Naive thymus-derived CD4-positive, alpha-beta T cell (primary cell): ENCODE measurements at regions of chr1 and their contacts with region 1.

Region 1: GRCh38 chr1:39609618-39610331 is 29.7 kb downstream of the HEYL start:
- DNase-seq: peak; percentile 10 to 84 (median 66)
- ATAC-seq: peak; percentile 89
- H3K4me3 ChIP-seq: no peak overlapping the region
- H3K4me3 Mint-ChIP-seq: peak overlapping the region in 2 of 10 donors; percentile 51 to 59
- H3K27ac ChIP-seq: no peak overlapping the region
- H3K27ac Mint-ChIP-seq: no peak overlapping the region
- H3K4me1 ChIP-seq: no peaks in the 10 kb centered on the region
- H3K4me1 Mint-ChIP-seq: peaks cover 0 to 9% (median 8%) of the 10 kb centered on the region in 7 donors
- H3K27me3 ChIP-seq: no peaks in the 10 kb centered on the region
- H3K27me3 Mint-ChIP-seq: peaks cover 0 to 4% (median 0%) of the 10 kb centered on the region in 5 donors

Region 2: DNA sequence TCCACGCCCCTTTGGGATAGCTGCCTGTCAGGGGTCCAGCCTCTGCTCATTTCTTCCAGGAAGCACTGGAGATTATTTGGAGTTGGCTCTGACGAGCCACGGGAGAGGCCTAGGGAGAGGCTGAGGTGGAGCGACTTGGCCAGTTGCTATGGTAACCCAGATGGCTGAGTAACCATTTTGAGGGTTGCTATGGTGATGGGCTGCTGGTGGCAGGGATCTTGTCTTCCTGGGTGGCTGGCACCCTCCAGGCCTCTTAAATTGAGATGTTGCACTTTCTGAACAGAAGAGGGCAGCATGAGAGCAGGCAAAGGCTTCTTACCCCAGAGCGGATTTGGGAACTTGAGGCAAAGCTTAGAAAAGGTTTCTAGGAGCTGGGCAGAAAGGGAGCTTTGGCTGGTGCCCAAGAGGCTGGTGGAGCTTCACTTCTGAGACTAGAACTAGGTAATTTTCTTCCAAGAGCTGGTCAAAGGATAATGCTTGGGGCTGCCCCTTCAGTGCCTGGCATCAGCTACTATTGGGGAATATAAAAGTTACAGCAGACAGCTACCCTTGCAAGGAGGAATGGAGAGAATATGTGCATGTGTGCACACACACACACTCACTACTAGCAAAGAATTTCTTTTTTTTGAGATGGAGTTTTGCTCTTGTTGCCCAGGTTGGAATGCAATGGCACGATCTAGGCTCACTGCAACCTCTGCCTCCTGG is 511.1 kb before region 1 on chr1:
- CTCF ChIA-PET with region 1: no interaction called
- POLR2A ChIA-PET with region 1: no interaction called
- intact Hi-C with region 1: loop called in 1 of 2 experiments (anchors 2 kb)
- DNase-seq: peak in 8 of 9 donors; percentile 42 to 75 (median 69)
- ATAC-seq: peak; percentile 89
- H3K4me3 ChIP-seq: no peak overlapping the region
- H3K4me3 Mint-ChIP-seq: no peak overlapping the region
- H3K27ac ChIP-seq: no peak overlapping the region
- H3K27ac Mint-ChIP-seq: peak overlapping the region in 5 of 9 donors; percentile 5 to 65 (median 9)
- H3K4me1 ChIP-seq: peaks cover 3 to 10% of the 10 kb centered on the region in 2 donors
- H3K4me1 Mint-ChIP-seq: peaks cover 22 to 24% (median 23%) of the 10 kb centered on the region in 7 donors
- H3K27me3 ChIP-seq: no peaks in the 10 kb centered on the region
- H3K27me3 Mint-ChIP-seq: peaks cover 0 to 3% (median 0%) of the 10 kb centered on the region in 5 donors

Region 3: GRCh38 chr1:39653546-39654031 is 43.8 kb after region 1 on chr1:
- CTCF ChIA-PET with region 1: interaction called, 29 read pairs
- POLR2A ChIA-PET with region 1: no interaction called
- intact Hi-C with region 1: loop called (anchors 1 kb)
- DNase-seq: peak; percentile 51 to 74 (median 68)
- ATAC-seq: peak; percentile 89
- H3K4me3 ChIP-seq: no peak overlapping the region
- H3K4me3 Mint-ChIP-seq: no peak overlapping the region
- H3K27ac ChIP-seq: no peak overlapping the region
- H3K27ac Mint-ChIP-seq: no peak overlapping the region
- H3K4me1 ChIP-seq: peaks cover 0 to 3% of the 10 kb centered on the region in 2 donors
- H3K4me1 Mint-ChIP-seq: peaks cover 0 to 17% (median 4%) of the 10 kb centered on the region in 7 donors
- H3K27me3 ChIP-seq: no peaks in the 10 kb centered on the region
- H3K27me3 Mint-ChIP-seq: peaks cover 0 to 13% (median 0%) of the 10 kb centered on the region in 5 donors

Region 4: GRCh38 chr1:39711966-39712340 is 102.2 kb after region 1 on chr1:
- CTCF ChIA-PET with region 1: interaction called, 11 read pairs
- POLR2A ChIA-PET with region 1: interaction called, 3 read pairs
- intact Hi-C with region 1: no loop called
- DNase-seq: no peak
- ATAC-seq: no peak
- H3K4me3 ChIP-seq: no peak overlapping the region
- H3K4me3 Mint-ChIP-seq: no peak overlapping the region
- H3K27ac ChIP-seq: no peak overlapping the region
- H3K27ac Mint-ChIP-seq: no peak overlapping the region
- H3K4me1 ChIP-seq: no peaks in the 10 kb centered on the region
- H3K4me1 Mint-ChIP-seq: no peaks in the 10 kb centered on the region
- H3K27me3 ChIP-seq: no peaks in the 10 kb centered on the region
- H3K27me3 Mint-ChIP-seq: peaks cover 5 to 41% (median 22%) of the 10 kb centered on the region in 5 donors

Region 5: GRCh38 chr1:39799770-39800470 is 190.1 kb after region 1 on chr1:
- CTCF ChIA-PET with region 1: interaction called, 11 read pairs
- POLR2A ChIA-PET with region 1: no interaction called
- intact Hi-C with region 1: loop called in 1 of 2 experiments (anchors 1 kb)
- DNase-seq: peak; percentile 23 to 76 (median 44)
- ATAC-seq: peak; percentile 79
- H3K4me3 ChIP-seq: peak overlapping the region; percentile 48
- H3K4me3 Mint-ChIP-seq: peak overlapping the region; percentile 42 to 76 (median 73)
- H3K27ac ChIP-seq: peak overlapping the region; percentile 22
- H3K27ac Mint-ChIP-seq: peak overlapping the region in 6 of 9 donors; percentile 38 to 94 (median 82)
- H3K4me1 ChIP-seq: peaks cover 4 to 7% of the 10 kb centered on the region in 2 donors
- H3K4me1 Mint-ChIP-seq: peaks cover 0 to 17% (median 11%) of the 10 kb centered on the region in 7 donors
- H3K27me3 ChIP-seq: no peaks in the 10 kb centered on the region
- H3K27me3 Mint-ChIP-seq: peaks cover 0 to 2% (median 0%) of the 10 kb centered on the region in 5 donors